Activated CD4-positive, alpha-beta T cell treated with anti-CD3 and anti-CD28 coated beads for 36 hours (primary cell): ENCODE measurements at regions of chr10 and their contacts with region 1.

Region 1: GRCh38 chr10:124447741-124448466 is 1.9 kb downstream of the NKX1-2 start:
- DNase-seq: peak; percentile 42
- ATAC-seq: peak; percentile 27
- H3K4me3 Mint-ChIP-seq: peak overlapping the region; percentile 39
- H3K27ac Mint-ChIP-seq: no peak overlapping the region
- H3K4me1 Mint-ChIP-seq: peaks cover 17% of the 10 kb centered on the region
- H3K27me3 Mint-ChIP-seq: peaks cover 69% of the 10 kb centered on the region

Region 2: DNA sequence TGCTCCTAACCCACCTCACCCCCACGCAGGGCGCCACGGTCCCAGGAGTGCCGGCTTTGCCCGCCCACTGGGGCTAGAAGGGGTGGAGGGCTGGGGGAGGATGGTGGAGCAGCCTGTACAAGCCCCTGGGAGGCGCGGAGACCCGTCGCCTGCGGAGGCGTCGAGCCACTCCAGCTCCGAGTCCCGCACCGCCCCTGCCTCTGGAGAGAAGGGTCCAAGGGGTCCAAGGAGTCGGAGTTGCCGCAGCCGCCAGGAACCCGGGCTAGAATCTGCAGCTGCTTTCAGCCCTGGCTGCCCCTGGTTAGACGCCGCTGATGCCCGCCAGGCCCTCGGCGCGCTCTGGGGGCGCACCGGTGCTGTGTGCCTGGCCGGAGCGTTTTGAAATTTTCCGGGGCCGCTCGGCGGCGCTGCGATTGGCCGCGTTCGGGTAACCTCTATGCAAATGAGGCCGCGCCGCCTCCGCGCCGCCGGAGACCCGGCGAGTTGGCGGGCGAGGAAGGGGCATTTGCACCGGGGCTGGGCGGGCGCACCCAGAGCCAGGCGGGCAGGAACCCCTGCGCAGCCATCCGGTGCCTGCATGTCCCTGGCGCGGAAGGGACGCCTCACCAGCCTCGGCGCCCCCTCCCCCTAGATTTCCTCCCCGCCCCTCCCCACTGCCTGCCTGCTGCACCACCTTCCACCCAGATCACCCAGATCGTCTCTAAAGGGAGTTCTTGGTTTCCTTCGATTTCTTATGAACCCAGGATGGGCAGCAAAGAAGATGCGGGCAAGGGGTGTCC is 1300.1 kb before region 1 on chr10 and contains the start of gene HMX2:
- CTCF ChIA-PET with region 1: no interaction called
- POLR2A ChIA-PET with region 1: no interaction called
- intact Hi-C with region 1: loop called in 1 of 2 experiments (anchors 10 kb)
- DNase-seq: peak; percentile 73
- ATAC-seq: peak; percentile 16
- H3K4me3 Mint-ChIP-seq: peak within 1 kb of the TSS; percentile 60
- H3K27ac Mint-ChIP-seq: no peak within 1 kb of the TSS
- H3K4me1 Mint-ChIP-seq: peaks cover 69% of the 10 kb centered on the region
- H3K27me3 Mint-ChIP-seq: peaks cover 54% of the 10 kb centered on the region
- total RNA-seq, gene HMX2: 0.18 to 0.28 TPM

Region 3: DNA sequence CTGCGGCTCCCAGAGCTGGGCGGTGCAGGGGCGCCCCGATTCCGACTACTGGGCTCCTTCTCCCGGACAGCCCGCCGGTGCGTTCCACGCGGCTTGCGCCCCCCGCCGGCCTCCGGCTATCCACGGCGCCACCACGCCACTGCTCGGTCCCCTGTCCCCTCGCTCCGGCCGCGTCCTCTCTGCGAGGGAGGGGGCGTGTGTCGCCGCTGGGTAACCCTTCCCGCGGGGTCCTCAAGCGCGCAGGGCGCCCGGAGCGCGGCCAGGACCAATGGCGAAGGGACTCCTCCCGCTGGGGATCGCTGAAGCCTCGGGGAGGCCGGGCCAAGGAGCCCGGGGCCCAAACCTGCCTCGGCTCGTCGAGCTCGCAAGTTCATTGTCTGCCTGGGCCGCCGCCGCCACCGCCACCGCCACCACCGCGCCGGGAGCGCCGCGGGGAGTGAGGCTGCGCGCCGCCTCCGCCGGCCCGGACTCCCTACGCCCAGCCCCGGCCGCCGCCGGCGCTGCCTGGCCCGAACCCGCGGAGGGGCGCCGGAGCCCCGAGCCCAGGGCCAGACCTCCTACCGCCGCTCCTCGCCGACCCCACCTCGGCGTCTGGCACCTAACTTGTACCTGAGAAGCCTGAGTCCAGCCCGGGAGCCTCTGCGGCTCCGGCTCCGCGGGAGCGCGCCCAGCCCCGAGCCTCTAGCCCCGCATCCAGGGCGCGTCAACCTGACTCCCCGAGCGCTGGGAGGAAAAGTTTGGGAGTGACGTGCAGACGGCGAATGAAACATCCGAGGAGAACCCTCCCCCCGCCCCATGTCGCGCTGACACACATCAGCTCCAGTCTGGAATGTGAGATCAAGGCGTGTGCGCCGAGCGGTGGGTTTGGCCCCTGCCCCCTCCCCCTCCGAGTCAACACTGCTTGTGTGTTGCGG is 354.8 kb before region 1 on chr10 and contains the start of gene CHST15:
- CTCF ChIA-PET with region 1: no interaction called
- POLR2A ChIA-PET with region 1: no interaction called
- intact Hi-C with region 1: loop called in 1 of 2 experiments (anchors 2 kb)
- DNase-seq: peak; percentile 18
- ATAC-seq: peak; percentile 14
- H3K4me3 Mint-ChIP-seq: peak within 1 kb of the TSS; percentile 54
- H3K27ac Mint-ChIP-seq: no peak within 1 kb of the TSS
- H3K4me1 Mint-ChIP-seq: peaks cover 2% of the 10 kb centered on the region
- H3K27me3 Mint-ChIP-seq: peaks cover 51% of the 10 kb centered on the region
- total RNA-seq, gene CHST15: 0.40 to 0.43 TPM

Region 4: DNA sequence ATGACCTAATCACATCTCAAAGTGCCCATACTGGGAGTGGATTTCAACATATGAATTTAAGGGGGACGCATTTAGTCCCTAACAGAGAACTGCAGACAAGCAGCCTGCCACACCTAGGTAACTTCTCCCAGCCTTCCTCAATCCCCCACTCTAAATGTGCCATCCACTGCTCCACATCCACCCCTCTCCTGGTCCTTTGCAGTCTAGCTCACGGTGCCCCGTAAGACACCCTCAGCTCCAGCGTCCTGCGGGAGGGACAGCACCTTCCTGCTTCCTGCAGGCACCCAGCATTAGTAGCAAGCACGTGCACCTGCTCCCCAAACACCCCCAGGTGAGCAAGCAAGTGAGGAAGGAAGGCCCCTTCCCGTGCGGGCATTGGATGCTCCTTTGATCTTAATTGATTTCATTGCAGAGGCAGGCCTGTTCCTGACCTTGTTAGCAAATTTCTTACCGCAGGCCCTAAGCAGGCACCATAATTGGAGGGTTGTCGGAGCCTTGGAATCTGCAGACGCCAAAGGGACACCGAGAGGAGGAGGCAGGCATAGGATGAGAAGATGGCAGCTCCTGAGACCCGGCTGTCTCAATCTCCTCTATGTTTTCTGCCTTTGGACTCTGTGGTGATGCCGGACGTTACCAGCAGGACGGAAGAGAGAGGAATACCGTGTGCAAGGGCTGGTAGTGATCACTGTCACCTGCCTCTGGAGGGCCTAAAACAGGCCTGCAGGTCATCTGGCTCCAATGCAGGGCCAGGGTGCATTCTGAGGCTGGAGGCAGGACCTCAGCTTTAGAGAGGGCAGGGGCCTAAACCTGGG is 278.7 kb before region 1 on chr10:
- CTCF ChIA-PET with region 1: no interaction called
- POLR2A ChIA-PET with region 1: no interaction called
- intact Hi-C with region 1: no loop called
- DNase-seq: no peak
- ATAC-seq: no peak
- H3K4me3 Mint-ChIP-seq: no peak overlapping the region
- H3K27ac Mint-ChIP-seq: no peak overlapping the region
- H3K4me1 Mint-ChIP-seq: no peaks in the 10 kb centered on the region
- H3K27me3 Mint-ChIP-seq: no peaks in the 10 kb centered on the region

Region 5: DNA sequence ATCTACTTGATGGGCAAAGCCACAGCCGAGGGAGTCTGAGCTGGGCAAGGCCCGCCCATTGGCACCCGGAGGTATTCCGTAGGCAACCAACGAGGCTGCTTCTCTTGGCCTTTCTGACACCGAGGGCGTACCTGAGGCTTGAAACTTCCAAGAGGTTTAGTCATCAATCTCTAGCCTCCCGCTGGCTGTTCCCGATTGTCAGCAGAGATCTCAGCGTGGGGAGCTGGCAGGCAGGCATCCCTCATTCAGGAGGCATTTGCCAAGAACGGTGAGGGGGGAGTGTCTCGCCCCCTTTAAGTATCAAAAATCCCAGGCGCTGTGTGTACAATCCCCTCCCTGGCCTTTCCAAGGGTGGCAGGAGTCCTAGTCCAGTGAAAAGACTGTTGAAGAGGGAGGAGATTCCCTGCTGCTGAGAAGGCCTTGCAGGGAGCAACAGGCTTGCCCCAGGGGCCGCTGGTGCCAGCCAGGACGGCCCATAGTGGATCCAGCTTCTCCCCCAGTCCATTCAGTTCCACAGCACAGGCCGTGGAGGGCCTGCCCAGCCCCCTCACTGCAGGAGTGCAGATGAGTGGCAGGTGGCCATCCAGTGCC is 68.9 kb before region 1 on chr10:
- CTCF ChIA-PET with region 1: no interaction called
- POLR2A ChIA-PET with region 1: no interaction called
- intact Hi-C with region 1: no loop called
- DNase-seq: no peak
- ATAC-seq: no peak
- H3K4me3 Mint-ChIP-seq: no peak overlapping the region
- H3K27ac Mint-ChIP-seq: no peak overlapping the region
- H3K4me1 Mint-ChIP-seq: no peaks in the 10 kb centered on the region
- H3K27me3 Mint-ChIP-seq: peaks cover 33% of the 10 kb centered on the region

Region 6: DNA sequence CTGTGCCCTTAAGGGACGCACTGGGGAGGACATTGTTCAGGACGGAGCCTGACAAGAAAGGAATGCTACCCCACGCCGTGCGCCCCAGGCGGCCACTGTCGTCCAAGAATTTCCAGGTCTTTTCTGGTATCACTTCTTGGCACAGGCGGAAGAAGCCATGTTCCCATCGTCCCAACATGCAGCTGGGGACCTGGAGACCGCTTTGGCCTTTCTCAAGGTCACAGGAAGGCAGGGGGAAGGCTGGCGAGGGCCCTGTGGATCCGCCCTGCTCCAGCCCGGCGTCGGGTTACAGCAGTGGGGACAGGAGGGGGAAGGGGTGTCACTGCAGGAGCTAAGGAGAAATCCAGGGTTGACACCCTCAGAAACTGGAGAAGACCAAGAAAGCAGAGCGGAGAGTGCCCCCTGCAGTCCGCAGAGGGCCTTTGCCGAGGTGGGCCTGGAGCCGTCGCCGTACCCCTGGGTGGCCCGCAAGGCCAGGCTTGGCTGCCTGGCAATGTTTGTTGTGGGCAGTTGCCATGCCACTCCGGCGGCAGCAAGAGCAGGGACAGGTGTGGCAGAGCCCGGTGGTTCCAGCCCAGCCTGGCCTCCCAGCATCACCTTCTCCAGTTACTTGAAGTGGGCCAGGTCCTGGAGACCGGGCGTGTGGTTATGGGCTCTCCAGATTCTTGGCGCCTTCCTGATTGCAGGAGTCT is 117.8 kb after region 1 on chr10:
- CTCF ChIA-PET with region 1: no interaction called
- POLR2A ChIA-PET with region 1: no interaction called
- intact Hi-C with region 1: no loop called
- DNase-seq: peak; percentile 20
- ATAC-seq: peak; percentile 30
- H3K4me3 Mint-ChIP-seq: no peak overlapping the region
- H3K27ac Mint-ChIP-seq: no peak overlapping the region
- H3K4me1 Mint-ChIP-seq: no peaks in the 10 kb centered on the region
- H3K27me3 Mint-ChIP-seq: no peaks in the 10 kb centered on the region